ENCODE measurements at regions of chr5 and their contacts with region 1.

Region 1: DNA sequence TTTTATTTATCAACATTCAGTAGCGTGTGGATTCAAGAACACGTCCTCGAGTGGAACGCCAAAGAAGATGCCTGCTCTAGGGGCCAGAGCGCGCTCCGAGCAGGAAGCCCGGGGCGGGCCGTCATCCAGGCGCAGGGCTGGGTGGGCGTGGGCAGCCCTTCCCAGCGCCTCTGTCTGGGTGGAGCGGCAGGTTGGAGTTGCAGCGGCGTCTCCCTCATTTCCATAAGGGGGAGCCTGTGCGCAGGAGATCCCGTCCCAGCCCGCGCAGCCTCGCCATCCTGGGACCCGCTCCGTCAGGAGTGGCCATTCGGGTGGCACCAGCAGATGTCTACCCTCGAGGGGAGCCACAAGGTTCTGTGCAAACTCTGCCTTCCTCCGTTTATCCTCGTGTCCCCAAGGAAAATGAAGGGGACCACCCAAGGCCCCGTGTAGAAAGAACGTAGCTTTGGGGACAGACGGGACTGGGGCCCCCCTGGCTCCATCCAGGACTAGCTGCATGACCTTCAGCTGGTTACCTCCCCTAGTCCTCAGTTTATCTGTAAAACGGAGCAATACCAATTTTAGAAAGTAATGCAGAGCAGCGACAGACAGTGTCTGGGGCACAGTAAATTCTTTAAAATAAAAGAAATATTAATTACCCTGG is 155.5 kb upstream of the SMIM23 start:
- DNase-seq: no peak
- ATAC-seq: peak; percentile 99
- H3K4me3 ChIP-seq: peak overlapping the region; percentile 23 to 32
- H3K27ac ChIP-seq: no peak overlapping the region
- H3K4me1 ChIP-seq: no peaks in the 10 kb centered on the region; the same call in 1 of the 2 replicates
- H3K27me3 ChIP-seq: peaks cover 2% of the 10 kb centered on the region; the same call in 1 of the 2 replicates
- CTCF ChIP-seq: peak; percentile 85

Region 2: DNA sequence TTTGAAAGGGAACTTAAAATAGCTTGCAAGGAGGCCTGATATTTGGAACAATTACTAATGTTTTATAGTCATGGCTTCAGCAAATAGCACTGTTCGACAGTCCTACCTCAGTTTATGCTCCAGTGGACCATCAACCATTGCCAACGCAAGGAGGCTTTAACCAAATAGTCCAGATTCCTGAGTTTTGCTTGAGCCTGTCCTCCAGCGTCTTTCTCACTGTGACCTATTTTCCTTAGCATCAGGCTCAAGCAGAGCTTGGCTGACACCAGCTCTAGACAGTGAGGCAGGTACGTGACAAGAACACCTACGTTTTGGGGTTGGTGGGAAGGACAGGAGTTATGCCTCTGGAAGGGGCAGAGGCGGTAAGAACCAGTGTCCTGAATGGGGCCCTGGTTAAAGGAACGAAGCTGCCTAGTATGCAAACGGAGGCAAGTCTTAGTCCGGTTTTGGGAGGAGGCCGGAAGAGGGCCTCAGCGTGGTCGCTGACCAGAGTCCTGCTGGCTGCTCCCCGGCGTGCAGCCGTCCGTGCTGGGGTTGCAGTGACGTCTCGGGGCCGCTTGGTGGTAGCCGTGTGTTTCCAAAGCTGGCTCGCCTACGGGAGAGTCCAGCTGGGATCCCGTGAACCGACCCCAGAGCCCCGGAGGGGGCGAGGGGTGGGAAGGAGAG is 211.7 kb before region 1 on chr5:
- CTCF ChIA-PET with region 1: interaction called, 6 read pairs
- POLR2A ChIA-PET with region 1: no interaction called
- in situ Hi-C with region 1: no loop called
- intact Hi-C with region 1: loop called (anchors 10 kb)
- DNase-seq: peak; percentile 56
- ATAC-seq: peak; percentile 81
- H3K4me3 ChIP-seq: peak overlapping the region; percentile 45 to 72
- H3K27ac ChIP-seq: peak overlapping the region; percentile 69
- H3K4me1 ChIP-seq: peaks cover 37% of the 10 kb centered on the region
- H3K27me3 ChIP-seq: no peaks in the 10 kb centered on the region
- CTCF ChIP-seq: peak; percentile 93

Region 3: DNA sequence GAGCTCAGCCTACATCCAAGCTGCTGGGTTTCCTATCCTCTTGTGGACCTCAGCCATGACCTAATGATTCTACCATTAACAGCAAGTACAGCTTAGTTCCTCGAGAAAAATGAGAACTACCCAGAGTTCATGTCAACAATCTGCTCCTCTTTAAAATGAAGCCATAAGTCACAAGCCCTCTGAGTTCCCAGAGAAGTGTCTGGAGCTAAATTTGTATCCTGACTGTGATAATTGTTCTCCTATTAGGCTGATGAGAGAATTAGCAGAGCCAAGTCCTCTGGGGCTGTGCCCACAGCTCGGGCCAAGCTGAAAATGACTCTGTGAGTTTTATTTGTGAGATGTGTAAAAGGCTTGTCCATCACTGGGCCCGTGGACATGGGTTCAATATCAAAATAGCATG is 10.3 kb after region 1 on chr5:
- CTCF ChIA-PET with region 1: no interaction called
- POLR2A ChIA-PET with region 1: no interaction called
- in situ Hi-C with region 1: no loop called
- intact Hi-C with region 1: no loop called
- DNase-seq: no peak
- ATAC-seq: no peak
- H3K4me3 ChIP-seq: no peak overlapping the region
- H3K27ac ChIP-seq: no peak overlapping the region
- H3K4me1 ChIP-seq: no peaks in the 10 kb centered on the region
- H3K27me3 ChIP-seq: 0 out of 2 replicates have a peak, but pooled peaks cover 2% of the 10 kb centered on the region
- CTCF ChIP-seq: no peak

Region 4: GRCh38 chr5:171858303-171858702 is 228.2 kb after region 1 on chr5:
- CTCF ChIA-PET with region 1: interaction called, 3 read pairs
- POLR2A ChIA-PET with region 1: no interaction called
- in situ Hi-C with region 1: no loop called
- intact Hi-C with region 1: loop called (anchors 5 kb)
- DNase-seq: no peak
- ATAC-seq: peak; percentile 69
- H3K4me3 ChIP-seq: no peak overlapping the region
- H3K27ac ChIP-seq: no peak overlapping the region
- H3K4me1 ChIP-seq: no peaks in the 10 kb centered on the region
- H3K27me3 ChIP-seq: no peaks in the 10 kb centered on the region
- CTCF ChIP-seq: peak; percentile 81

Measured in Panc1 (cell line).